HEK293T (cell line): ENCODE measurements at regions of chr6 and their contacts with region 1.

Region 1: DNA sequence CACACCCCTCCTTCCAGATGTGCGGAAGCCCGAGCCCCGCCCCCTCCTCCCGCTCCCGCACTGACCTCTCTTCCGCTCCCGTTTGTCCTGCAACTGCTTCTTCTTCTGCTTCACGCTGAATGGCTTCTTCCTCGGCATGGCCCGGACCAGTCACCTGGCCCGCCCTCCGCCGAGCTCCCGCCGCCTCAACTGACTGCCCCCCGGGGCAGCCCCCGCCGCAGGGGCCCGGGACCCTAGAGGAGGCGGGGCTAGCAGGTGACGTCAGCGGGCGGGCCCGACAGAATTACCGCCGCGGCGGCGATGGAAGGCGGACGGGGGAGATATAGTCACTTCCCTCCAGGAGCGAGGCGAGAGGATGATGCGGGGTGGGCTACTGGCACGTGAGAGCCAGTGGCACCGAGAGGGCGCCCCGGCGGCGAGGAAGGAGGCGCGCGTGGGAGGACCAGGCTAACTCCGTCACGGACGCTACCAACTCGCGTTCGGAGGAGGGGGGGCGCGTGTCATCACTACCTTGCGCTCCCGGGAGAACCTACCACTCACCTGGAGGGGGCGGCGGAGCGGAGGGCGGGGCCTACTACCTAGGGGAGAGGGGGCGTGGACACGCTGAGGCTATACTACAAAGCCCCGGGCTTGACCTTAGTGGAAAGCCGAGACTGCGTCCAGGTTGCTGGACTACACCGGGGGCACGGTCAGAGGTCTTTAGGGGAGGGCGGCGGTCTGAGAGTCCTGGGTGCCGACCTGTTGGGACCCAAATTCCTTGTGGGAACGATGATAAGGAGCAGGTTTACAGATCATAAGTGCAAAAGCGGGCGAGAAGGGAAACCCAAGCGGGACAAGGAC is at the start of gene GNL1:
- DNase-seq: peak; percentile 85

Region 2: DNA sequence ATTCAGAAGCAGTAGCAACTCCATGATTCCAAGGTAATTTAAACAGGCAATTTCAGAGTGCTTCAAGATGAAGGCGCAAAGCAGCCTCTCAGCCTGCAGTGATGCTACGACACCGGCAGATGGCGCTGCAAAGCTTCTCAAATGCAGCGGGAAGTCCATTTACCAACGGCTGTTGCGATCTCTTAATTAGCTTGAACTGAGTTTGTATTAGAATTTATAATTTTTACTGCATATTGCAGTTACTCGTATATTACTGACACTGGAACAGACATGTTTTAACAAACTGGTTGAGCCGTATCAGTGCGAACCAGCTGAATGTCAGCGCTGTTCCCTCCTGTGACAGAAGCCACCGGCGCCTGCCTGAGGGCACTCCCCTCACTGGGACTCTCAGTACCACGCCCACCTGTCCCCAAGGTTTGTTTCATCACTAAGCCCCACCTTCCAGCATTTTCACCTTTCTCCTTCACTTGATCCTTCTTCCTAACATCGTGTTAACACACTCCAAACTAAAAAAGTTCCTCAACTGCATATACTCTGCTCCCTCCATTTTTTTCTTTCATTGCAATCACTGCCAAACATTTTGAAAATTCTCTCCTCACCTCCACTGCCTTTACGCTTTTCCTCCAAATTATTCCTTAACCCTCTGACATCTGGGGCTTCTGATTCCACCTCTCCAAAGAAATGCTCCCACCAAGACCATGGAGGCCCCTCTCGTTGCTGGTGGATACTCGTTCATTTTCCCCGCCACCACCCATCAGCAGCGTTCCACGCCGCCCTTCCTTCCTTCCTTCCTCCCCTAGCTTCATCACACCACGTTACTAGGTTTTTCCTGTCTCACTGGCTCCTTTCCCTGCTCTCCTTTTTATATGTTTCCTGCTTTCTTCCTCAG is 14.5 kb before region 1 on chr6:
- CTCF ChIA-PET with region 1: interaction called, 14 read pairs
- POLR2A ChIA-PET with region 1: interaction called, 19 read pairs
- DNase-seq: peak; percentile 74

Region 3: DNA sequence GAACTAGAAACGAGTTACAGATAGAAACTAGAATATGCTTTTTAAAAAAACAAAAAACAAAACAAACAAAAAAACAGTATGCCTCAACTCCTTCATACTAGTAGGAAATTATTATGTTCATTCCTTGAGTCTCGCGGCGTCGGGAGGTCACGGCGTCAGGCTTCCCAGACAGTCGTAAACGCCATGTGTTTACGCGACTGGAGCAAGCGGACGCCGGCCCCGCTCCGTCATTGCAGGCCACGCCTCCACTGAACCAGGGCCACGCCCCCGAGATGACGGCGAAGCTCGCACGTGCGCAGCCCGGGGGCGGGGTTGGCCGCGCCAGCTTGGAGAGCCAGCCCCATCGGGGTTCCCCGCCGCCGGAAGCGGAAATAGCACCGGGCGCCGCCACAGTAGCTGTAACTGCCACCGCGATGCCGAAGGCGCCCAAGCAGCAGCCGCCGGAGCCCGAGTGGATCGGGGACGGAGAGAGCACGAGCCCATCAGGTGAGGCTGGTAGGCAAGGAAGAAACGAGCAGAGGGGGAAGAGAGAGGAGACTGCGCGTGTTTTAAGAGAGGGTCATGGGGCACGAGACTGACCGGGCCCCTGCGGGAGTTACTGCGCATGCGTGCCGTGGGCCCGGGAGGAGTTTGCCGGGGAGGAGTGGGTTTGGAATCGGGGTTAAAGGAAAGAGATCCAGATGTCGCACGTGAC is 14.9 kb after region 1 on chr6 and contains the start of gene ABCF1:
- CTCF ChIA-PET with region 1: no interaction called
- POLR2A ChIA-PET with region 1: interaction called, 32 read pairs
- DNase-seq: peak; percentile 99

Region 4: GRCh38 chr6:30590994-30591393 is 34.7 kb after region 1 on chr6:
- CTCF ChIA-PET with region 1: no interaction called
- POLR2A ChIA-PET with region 1: interaction called, 10 read pairs
- DNase-seq: no peak

Region 5: GRCh38 chr6:30787954-30788353 is 231.7 kb after region 1 on chr6:
- CTCF ChIA-PET with region 1: no interaction called
- POLR2A ChIA-PET with region 1: no interaction called
- DNase-seq: no peak